Left ventricle myocardium inferior (tissue), 1 donor: ENCODE measurements at regions of chr21 and their contacts with region 1.

Region 1: DNA sequence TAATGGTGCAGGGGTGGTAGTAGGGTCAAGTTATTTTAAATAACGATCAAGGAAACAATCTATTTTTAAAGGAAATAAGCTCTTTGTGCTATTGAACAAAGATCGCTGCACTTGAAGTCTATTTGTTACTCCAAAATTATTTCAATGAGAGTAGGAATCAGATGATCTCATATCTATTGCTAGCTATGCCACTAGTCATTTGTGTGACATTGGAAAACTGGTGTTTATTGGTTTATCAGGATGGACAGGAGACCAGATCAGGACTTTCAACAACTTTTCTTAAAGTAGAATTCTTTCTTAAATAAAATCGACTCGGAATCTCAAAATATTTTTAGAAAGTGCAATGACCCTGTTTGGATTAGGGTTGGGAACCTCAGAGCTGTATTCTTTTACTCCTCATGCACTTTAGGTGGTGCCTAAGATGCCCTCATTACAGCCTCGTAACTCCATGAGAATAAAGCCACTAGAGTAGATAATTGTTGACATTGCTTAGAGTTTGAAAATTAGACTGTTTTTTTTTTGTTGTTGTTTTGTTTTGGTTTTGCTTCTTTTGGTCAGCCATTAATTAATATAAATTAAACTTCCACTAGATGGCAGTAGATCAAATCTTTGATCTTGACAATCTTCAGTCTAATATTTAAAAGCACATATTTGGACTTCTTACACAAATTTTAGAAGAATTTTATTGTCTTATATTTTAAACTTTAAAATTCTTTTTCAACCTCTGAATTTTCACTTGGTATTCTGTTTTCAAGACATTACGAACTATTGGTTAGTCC is 352.4 kb downstream of the USP25 start:
- DNase-seq: no peak
- H3K4me3 ChIP-seq: peak overlapping the region; percentile 31
- H3K27ac ChIP-seq: peak overlapping the region; percentile 18
- H3K4me1 ChIP-seq: peaks cover 11% of the 10 kb centered on the region
- H3K27me3 ChIP-seq: no peaks in the 10 kb centered on the region
- CTCF ChIP-seq: peak; percentile 60

Region 2: GRCh38 chr21:16330082-16330907 is 248.1 kb after region 1 on chr21:
- intact Hi-C with region 1: loop called (anchors 2 kb)
- DNase-seq: no peak
- H3K4me3 ChIP-seq: peak overlapping the region; percentile 39
- H3K27ac ChIP-seq: no peak overlapping the region
- H3K4me1 ChIP-seq: peaks cover 10% of the 10 kb centered on the region
- H3K27me3 ChIP-seq: no peaks in the 10 kb centered on the region
- CTCF ChIP-seq: peak; percentile 84